SK-N-SH (cell line): ENCODE measurements at regions of chr7 and their contacts with region 1.

Region 1: DNA sequence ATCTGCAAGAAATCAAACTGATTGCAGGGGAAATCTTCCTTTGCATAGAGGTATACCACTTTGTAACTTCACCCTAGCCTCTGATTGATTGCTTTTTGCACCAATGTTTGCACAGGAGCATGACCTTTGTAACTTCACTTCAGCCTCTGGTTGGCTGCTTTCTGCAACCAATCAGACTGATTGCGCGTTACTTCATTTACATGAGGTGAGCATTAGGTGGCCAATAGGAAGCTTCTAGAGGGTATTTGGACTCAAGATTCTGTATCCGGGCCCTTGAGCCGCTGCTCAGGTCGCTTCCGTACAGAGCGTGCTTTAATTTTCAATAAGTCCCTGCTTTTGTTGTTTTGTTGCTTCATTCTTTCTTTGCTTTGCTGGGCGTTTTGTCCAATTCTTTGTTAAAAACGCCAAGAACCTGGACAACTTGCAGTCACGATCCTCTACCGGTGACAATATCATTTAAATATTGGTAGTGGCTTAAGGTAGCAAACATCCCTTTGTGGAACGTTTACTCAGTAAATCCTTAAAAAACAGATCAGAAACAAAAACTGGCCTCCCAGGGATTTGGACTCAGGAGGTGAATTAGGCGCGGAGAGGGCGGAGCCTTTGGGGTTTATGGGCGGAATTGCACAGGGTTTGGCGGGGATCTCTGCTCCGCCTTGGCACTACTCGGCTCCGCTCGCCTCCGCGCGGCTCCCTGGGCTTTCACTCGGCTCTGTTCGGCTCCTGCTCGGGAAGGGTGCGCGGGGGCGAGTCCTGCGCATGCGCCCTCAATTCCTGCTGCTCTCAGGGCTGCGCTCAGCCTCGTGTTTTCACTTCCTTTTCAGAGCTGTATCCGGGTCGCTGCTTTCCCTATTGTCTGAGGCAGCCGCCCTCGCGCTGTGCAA is at the start of gene PHF14:
- DNase-seq: peak; percentile 97
- H3K4me3 ChIP-seq: peak within 1 kb of the TSS; percentile 72 to 99
- H3K27ac ChIP-seq: peak within 1 kb of the TSS; percentile 88 to 100
- H3K4me1 ChIP-seq: peaks cover 9 to 19% of the 10 kb centered on the region in 2 experiments; a peak in 3 of 4 replicates
- H3K27me3 ChIP-seq: no peaks in the 10 kb centered on the region
- CTCF ChIP-seq: no peak
- EP300 ChIP-seq: no peak; a peak in 1 of 4 replicates
- RAD21 ChIP-seq: 0 out of 2 replicates have a peak, but pooled peaks have one; percentile 1
- polyA plus RNA-seq, gene PHF14: 19.2 and 19.9 TPM in 2 replicates

Region 2: GRCh38 chr7:10192074-10192473 is 781.2 kb before region 1 on chr7:
- CTCF ChIA-PET with region 1: no interaction called
- POLR2A ChIA-PET with region 1: no interaction called
- DNase-seq: no peak
- H3K4me3 ChIP-seq: no peak overlapping the region
- H3K27ac ChIP-seq: no peak overlapping the region
- H3K4me1 ChIP-seq: no peaks in the 10 kb centered on the region; a peak in 1 of 4 replicates
- H3K27me3 ChIP-seq: no peaks in the 10 kb centered on the region
- CTCF ChIP-seq: no peak
- EP300 ChIP-seq: no peak
- RAD21 ChIP-seq: no peak

Region 3: GRCh38 chr7:10939911-10940703 is 33.2 kb before region 1 on chr7:
- CTCF ChIA-PET with region 1: interaction called, 4 read pairs
- POLR2A ChIA-PET with region 1: interaction called, 43 read pairs
- DNase-seq: peak; percentile 99
- H3K4me3 ChIP-seq: peak overlapping the region; percentile 91 to 92
- H3K27ac ChIP-seq: peak overlapping the region; percentile 95 to 99
- H3K4me1 ChIP-seq: peaks cover 5 to 18% of the 10 kb centered on the region in 2 experiments; a peak in 2 of 4 replicates
- H3K27me3 ChIP-seq: no peaks in the 10 kb centered on the region
- CTCF ChIP-seq: no peak
- EP300 ChIP-seq: no peak
- RAD21 ChIP-seq: peak; percentile 30